Right ventricle myocardium inferior (tissue), 1 donor: ENCODE measurements at regions of chr16 and their contacts with region 1.

Region 1: GRCh38 chr16:77856438-77857160 is 68.2 kb downstream of the VAT1L start:
- DNase-seq: no peak
- ATAC-seq: no peak

Region 2: GRCh38 chr16:77834635-77835540 is 21.7 kb before region 1 on chr16:
- intact Hi-C with region 1: no loop called
- DNase-seq: no peak
- ATAC-seq: no peak

Region 3: GRCh38 chr16:77919761-77920415 is 63.3 kb after region 1 on chr16:
- intact Hi-C with region 1: loop called (anchors 5 kb)
- DNase-seq: no peak
- ATAC-seq: no peak

Region 4: GRCh38 chr16:77971306-77972271 is 115.0 kb after region 1 on chr16:
- intact Hi-C with region 1: loop called (anchors 5 kb)
- DNase-seq: peak; percentile 90
- ATAC-seq: peak; percentile 86

Region 5: DNA sequence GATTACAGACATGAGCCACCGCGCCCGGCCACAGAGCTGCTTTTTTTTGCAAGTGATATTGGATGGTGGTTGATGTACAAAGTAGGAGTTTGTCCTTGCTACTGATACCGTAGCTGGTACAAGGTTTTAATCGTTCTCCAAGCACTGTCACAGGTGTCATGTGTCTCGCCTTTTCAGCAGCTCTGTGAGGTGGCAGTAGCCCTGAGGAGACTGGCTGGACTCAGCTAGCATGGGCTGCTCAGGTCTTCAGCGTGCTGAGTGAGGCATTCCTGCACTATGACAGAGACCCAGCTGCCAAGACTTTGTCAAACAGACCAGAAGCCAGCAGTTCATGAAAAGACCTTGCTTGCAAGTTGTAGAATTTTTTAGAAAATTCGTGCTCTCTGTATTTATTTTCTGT is 250.1 kb after region 1 on chr16:
- intact Hi-C with region 1: no loop called
- DNase-seq: no peak
- ATAC-seq: peak; percentile 61